CD4-positive, alpha-beta T cell (primary cell): ENCODE measurements at regions of chr17 and their contacts with region 1.

Region 1: GRCh38 chr17:28644985-28645939 is at the start of gene BLTP2:
- DNase-seq: peak; percentile 90 to 99 (median 96)
- ATAC-seq: peak; percentile 96
- H3K4me3 ChIP-seq: peak within 1 kb of the TSS; percentile 94
- H3K4me3 Mint-ChIP-seq: peak within 1 kb of the TSS; percentile 93
- H3K27ac ChIP-seq: peak within 1 kb of the TSS; percentile 76 to 96
- H3K27ac Mint-ChIP-seq: peak within 1 kb of the TSS; percentile 96
- H3K4me1 ChIP-seq: peaks cover 50% of the 10 kb centered on the region
- H3K4me1 Mint-ChIP-seq: peaks cover 38% of the 10 kb centered on the region
- H3K27me3 ChIP-seq: no peaks in the 10 kb centered on the region
- H3K27me3 Mint-ChIP-seq: no peaks in the 10 kb centered on the region
- CTCF ChIP-seq: no peak
- total RNA-seq, gene BLTP2: 120 to 124 TPM

Region 2: GRCh38 chr17:28335201-28335955 is 309.9 kb before region 1 on chr17 and contains the starts of genes IFT20 and TNFAIP1:
- CTCF ChIA-PET with region 1: no interaction called
- POLR2A ChIA-PET with region 1: interaction called, 4 read pairs
- intact Hi-C with region 1: loop called in 1 of 2 experiments (anchors 10 kb)
- DNase-seq: peak; percentile 92 to 100 (median 96)
- ATAC-seq: peak; percentile 95
- H3K4me3 ChIP-seq: peak within 1 kb of the TSS; percentile 92
- H3K4me3 Mint-ChIP-seq: peak within 1 kb of the TSS; percentile 98
- H3K27ac ChIP-seq: peak within 1 kb of the TSS; percentile 87 to 91
- H3K27ac Mint-ChIP-seq: peak within 1 kb of the TSS; percentile 88
- H3K4me1 ChIP-seq: peaks cover 38% of the 10 kb centered on the region
- H3K4me1 Mint-ChIP-seq: peaks cover 56% of the 10 kb centered on the region
- H3K27me3 ChIP-seq: no peaks in the 10 kb centered on the region
- H3K27me3 Mint-ChIP-seq: no peaks in the 10 kb centered on the region
- CTCF ChIP-seq: no peak
- total RNA-seq, gene IFT20: 52.6 to 53.1 TPM
- total RNA-seq, gene TNFAIP1: 9.5 to 12.1 TPM

Region 3: DNA sequence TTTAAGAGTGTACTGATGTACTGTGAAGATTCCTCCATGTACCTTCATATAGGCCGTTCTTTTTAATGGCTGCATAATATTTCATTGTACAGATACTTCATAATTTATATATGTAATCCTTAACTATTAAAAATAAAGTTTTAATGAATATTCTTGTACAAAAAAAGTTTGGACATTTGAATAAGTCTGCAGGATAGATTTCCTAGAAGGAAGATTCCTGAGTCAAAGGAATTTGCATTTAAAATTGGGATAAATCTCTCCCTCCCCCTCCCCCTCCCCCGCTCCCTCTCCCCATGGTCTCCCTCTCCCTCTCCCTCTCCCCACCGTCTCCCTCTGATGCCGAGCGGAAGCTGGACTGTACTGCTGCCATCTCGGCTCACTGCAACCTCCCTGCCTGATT is 187.4 kb before region 1 on chr17:
- CTCF ChIA-PET with region 1: no interaction called
- POLR2A ChIA-PET with region 1: no interaction called
- intact Hi-C with region 1: no loop called
- DNase-seq: no peak
- ATAC-seq: no peak
- H3K4me3 ChIP-seq: no peak overlapping the region
- H3K4me3 Mint-ChIP-seq: no peak overlapping the region
- H3K27ac ChIP-seq: no peak overlapping the region
- H3K27ac Mint-ChIP-seq: no peak overlapping the region
- H3K4me1 ChIP-seq: no peaks in the 10 kb centered on the region
- H3K4me1 Mint-ChIP-seq: no peaks in the 10 kb centered on the region
- H3K27me3 ChIP-seq: no peaks in the 10 kb centered on the region
- H3K27me3 Mint-ChIP-seq: no peaks in the 10 kb centered on the region
- CTCF ChIP-seq: no peak

Region 4: DNA sequence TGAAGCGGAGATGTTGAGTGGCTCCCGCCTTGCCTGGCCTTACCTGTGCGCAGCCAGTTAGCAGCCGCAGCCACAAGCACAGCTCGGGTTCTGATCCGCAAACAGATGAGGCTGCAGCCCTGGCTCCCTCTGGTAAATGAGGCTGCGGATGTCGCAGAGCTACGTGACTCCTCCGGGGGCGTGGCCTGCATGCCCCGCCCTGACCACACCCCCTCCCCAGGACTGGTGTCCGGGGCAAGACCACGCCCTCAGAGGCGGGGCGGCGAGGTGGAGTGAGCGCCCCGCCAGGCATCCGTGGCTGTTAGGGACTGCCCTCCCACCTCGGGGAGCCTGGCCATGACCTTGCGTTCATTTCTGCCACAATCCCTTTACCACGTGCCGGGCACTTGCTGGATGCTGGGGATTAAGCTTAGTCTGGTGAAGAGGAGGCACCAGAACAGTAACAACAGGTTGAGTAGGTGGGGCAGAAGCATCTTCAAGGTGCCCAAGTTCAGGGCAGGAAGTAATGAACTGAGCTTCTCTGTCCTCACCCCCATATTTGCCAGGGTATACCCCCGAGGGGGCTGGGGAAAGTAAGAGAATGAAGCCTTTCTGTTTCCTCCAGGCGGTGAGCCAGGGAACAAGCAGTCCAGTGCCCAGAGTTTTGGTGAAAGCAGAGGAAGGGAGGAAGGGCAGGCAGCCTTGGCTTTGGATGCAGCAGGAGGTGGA is 68.3 kb before region 1 on chr17 and contains the start of gene ALDOC:
- CTCF ChIA-PET with region 1: interaction called, 3 read pairs
- POLR2A ChIA-PET with region 1: interaction called, 15 read pairs
- intact Hi-C with region 1: loop called in 1 of 2 experiments (anchors 5 kb)
- DNase-seq: peak; percentile 95 to 100 (median 98)
- ATAC-seq: peak; percentile 97
- H3K4me3 ChIP-seq: peak within 1 kb of the TSS; percentile 46
- H3K4me3 Mint-ChIP-seq: peak within 1 kb of the TSS; percentile 87
- H3K27ac ChIP-seq: peak within 1 kb of the TSS in 1 of 2 donors; percentile 41
- H3K27ac Mint-ChIP-seq: peak within 1 kb of the TSS; percentile 77
- H3K4me1 ChIP-seq: peaks cover 36% of the 10 kb centered on the region
- H3K4me1 Mint-ChIP-seq: peaks cover 31% of the 10 kb centered on the region
- H3K27me3 ChIP-seq: no peaks in the 10 kb centered on the region
- H3K27me3 Mint-ChIP-seq: no peaks in the 10 kb centered on the region
- CTCF ChIP-seq: no peak
- total RNA-seq, gene ALDOC: 21.8 to 22.7 TPM

Region 5: DNA sequence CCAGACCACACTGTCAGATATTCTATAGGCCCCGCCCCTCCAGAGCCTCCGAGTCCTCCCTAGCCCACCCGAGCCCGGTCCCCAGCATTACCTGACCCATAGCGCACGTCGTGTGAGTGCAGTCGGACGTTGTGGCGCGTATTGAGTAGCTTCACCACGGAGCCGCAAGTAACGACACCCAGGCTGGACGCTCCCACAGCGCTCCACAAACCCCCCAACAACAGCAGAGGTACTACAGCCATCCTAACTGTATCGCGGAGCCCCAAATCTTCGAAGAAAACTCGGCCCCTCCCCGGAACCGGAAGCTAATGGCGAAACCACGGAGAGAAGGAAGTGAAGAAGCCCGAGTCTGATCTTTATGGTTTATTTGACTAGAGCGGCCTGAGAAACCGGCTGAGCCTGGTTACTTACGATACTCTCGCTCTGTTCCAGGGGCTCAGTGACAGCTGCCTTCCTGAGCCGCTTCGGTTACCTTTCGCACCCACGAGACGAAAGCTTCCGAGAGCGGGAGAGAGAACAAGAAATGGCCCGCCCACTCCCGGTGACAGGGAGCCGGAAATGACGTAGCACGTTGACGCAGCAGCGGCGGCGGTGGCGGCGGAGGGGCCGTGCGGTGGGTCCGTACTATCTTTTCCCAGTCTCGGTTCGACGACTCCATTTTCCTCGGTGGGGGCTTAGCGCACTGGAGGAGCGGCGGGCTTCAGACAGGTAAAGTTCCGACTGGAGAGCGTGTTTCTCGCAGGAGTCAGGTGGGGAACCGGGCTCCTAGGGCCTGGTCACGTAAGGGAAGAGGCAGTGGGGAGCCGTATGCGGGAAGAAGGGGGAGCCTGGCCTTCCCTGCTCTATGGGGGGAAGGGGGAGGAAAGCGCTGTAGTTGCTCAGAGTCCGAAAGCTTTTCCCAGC is 16.6 kb after region 1 on chr17 and contains the starts of genes SDF2 and SUPT6H:
- CTCF ChIA-PET with region 1: interaction called, 34 read pairs
- POLR2A ChIA-PET with region 1: interaction called, 115 read pairs
- intact Hi-C with region 1: loop called (anchors 1 kb)
- DNase-seq: peak; percentile 88 to 97 (median 92)
- ATAC-seq: peak; percentile 83
- H3K4me3 ChIP-seq: peak within 1 kb of the TSS; percentile 81
- H3K4me3 Mint-ChIP-seq: peak within 1 kb of the TSS; percentile 99
- H3K27ac ChIP-seq: peak within 1 kb of the TSS; percentile 97 to 99
- H3K27ac Mint-ChIP-seq: peak within 1 kb of the TSS; percentile 99
- H3K4me1 ChIP-seq: peaks cover 45% of the 10 kb centered on the region
- H3K4me1 Mint-ChIP-seq: peaks cover 64% of the 10 kb centered on the region
- H3K27me3 ChIP-seq: no peaks in the 10 kb centered on the region
- H3K27me3 Mint-ChIP-seq: no peaks in the 10 kb centered on the region
- CTCF ChIP-seq: no peak
- total RNA-seq, gene SDF2: 30.3 to 32.0 TPM
- total RNA-seq, gene SUPT6H: 149 to 151 TPM

Region 6: GRCh38 chr17:28717578-28718333 is 72.5 kb after region 1 on chr17 and contains the start of gene RAB34:
- CTCF ChIA-PET with region 1: interaction called, 11 read pairs
- POLR2A ChIA-PET with region 1: interaction called, 29 read pairs
- intact Hi-C with region 1: loop called (anchors 5 kb)
- DNase-seq: peak in 6 of 14 experiments; percentile 12 to 60 (median 43)
- ATAC-seq: no peak
- H3K4me3 ChIP-seq: peak within 1 kb of the TSS; percentile 36
- H3K4me3 Mint-ChIP-seq: peak within 1 kb of the TSS; percentile 79
- H3K27ac ChIP-seq: no peak within 1 kb of the TSS
- H3K27ac Mint-ChIP-seq: peak within 1 kb of the TSS; percentile 79
- H3K4me1 ChIP-seq: peaks cover 55% of the 10 kb centered on the region
- H3K4me1 Mint-ChIP-seq: peaks cover 41% of the 10 kb centered on the region
- H3K27me3 ChIP-seq: peaks cover 17 to 21% of the 10 kb centered on the region in 2 experiments
- H3K27me3 Mint-ChIP-seq: peaks cover 35% of the 10 kb centered on the region
- CTCF ChIP-seq: no peak
- total RNA-seq, gene RAB34: 20.7 to 21.3 TPM

Region 7: GRCh38 chr17:28812091-28812747 is 167.0 kb after region 1 on chr17:
- CTCF ChIA-PET with region 1: no interaction called
- POLR2A ChIA-PET with region 1: no interaction called
- intact Hi-C with region 1: loop called in 1 of 2 experiments (anchors 5 kb)
- DNase-seq: peak; percentile 91 to 98 (median 95)
- ATAC-seq: peak; percentile 95
- H3K4me3 ChIP-seq: peak overlapping the region; percentile 78
- H3K4me3 Mint-ChIP-seq: peak overlapping the region; percentile 92
- H3K27ac ChIP-seq: peak overlapping the region; percentile 91 to 93
- H3K27ac Mint-ChIP-seq: peak overlapping the region; percentile 90
- H3K4me1 ChIP-seq: peaks cover 15% of the 10 kb centered on the region
- H3K4me1 Mint-ChIP-seq: peaks cover 49% of the 10 kb centered on the region
- H3K27me3 ChIP-seq: no peaks in the 10 kb centered on the region
- H3K27me3 Mint-ChIP-seq: no peaks in the 10 kb centered on the region
- CTCF ChIP-seq: no peak